Gastrocnemius medialis (tissue), 4 donors: ENCODE measurements at regions of chr16 and their contacts with region 1.

Region 1: DNA sequence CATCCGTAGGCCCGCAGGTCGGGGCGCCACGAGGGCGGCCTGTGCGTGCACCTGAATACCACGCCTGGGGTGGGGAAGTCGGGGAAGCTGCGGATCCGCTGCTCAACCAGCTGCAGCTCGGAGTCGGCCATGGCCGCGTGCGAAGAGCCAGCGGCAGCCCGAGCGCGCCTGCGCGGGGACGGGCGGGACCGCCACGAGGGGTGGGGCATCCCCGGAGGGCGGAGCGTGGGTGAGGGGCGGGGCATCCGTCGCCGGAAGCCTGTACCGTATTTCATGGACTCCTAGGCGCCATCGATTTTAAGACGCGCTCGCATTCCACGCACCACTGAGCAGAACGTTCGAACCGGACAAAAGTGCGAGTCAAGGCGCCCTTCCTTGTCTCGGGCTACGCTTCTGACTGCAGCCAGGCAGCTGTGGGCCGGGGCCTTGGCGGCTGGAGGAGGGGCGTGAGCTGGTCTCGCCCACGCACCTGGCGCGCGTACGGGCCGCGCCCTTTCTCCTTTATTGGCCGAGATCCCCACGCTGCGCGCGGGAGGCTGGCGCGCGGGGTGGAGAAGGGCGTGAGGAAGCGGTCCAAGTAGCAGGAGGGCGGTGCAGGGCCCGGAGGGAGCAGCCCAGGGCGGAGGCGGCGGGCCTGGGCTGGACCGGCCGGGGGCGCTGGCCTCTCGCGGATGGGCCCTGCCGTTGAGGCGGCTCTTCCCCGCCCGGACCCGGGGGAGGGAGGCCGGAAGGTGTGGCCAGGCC is at the start of gene APRT:
- DNase-seq: peak; percentile 89
- ATAC-seq: peak; percentile 90 to 92
- H3K4me3 ChIP-seq: peak within 1 kb of the TSS; percentile 70 to 81 (median 74)
- H3K27ac ChIP-seq: peak within 1 kb of the TSS; percentile 81 to 91 (median 90)
- H3K4me1 ChIP-seq: peaks cover 14 to 21% of the 10 kb centered on the region in 2 donors
- H3K27me3 ChIP-seq: no peaks in the 10 kb centered on the region
- CTCF ChIP-seq: peak in 3 of 5 experiments; percentile 16 to 45 (median 25)
- POLR2A ChIP-seq: peak; percentile 83 to 85
- total RNA-seq, gene APRT: 56.2 to 78.7 (median 62.4) TPM

Region 2: GRCh38 chr16:87860553-87861299 is 951.2 kb before region 1 on chr16:
- in situ Hi-C with region 1: no loop called
- intact Hi-C with region 1: loop called (anchors 10 kb)
- DNase-seq: peak; percentile 69 to 88
- ATAC-seq: peak; percentile 44 to 57
- H3K4me3 ChIP-seq: peak overlapping the region; percentile 56 to 68 (median 64)
- H3K27ac ChIP-seq: peak overlapping the region; percentile 85 to 100 (median 97)
- H3K4me1 ChIP-seq: peaks cover 27 to 47% of the 10 kb centered on the region in 2 donors
- H3K27me3 ChIP-seq: no peaks in the 10 kb centered on the region
- CTCF ChIP-seq: no peak
- POLR2A ChIP-seq: peak; percentile 83 to 85

Region 3: GRCh38 chr16:88856828-88857733 is 45.1 kb after region 1 on chr16 and contains the starts of genes GALNS and TRAPPC2L:
- in situ Hi-C with region 1: no loop called
- intact Hi-C with region 1: loop called (anchors 1 kb)
- DNase-seq: peak; percentile 97
- ATAC-seq: peak; percentile 92 to 95
- H3K4me3 ChIP-seq: peak within 1 kb of the TSS; percentile 91 to 99 (median 94)
- H3K27ac ChIP-seq: peak within 1 kb of the TSS; percentile 89 to 92 (median 90)
- H3K4me1 ChIP-seq: peaks cover 16 to 17% of the 10 kb centered on the region in 2 donors
- H3K27me3 ChIP-seq: no peaks in the 10 kb centered on the region
- CTCF ChIP-seq: peak in 2 of 5 experiments; percentile 44 to 54
- POLR2A ChIP-seq: peak; percentile 79 to 81
- total RNA-seq, gene GALNS: 8.8 to 14.7 (median 10.0) TPM
- total RNA-seq, gene TRAPPC2L: 17.8 to 27.9 (median 20.5) TPM

Region 4: DNA sequence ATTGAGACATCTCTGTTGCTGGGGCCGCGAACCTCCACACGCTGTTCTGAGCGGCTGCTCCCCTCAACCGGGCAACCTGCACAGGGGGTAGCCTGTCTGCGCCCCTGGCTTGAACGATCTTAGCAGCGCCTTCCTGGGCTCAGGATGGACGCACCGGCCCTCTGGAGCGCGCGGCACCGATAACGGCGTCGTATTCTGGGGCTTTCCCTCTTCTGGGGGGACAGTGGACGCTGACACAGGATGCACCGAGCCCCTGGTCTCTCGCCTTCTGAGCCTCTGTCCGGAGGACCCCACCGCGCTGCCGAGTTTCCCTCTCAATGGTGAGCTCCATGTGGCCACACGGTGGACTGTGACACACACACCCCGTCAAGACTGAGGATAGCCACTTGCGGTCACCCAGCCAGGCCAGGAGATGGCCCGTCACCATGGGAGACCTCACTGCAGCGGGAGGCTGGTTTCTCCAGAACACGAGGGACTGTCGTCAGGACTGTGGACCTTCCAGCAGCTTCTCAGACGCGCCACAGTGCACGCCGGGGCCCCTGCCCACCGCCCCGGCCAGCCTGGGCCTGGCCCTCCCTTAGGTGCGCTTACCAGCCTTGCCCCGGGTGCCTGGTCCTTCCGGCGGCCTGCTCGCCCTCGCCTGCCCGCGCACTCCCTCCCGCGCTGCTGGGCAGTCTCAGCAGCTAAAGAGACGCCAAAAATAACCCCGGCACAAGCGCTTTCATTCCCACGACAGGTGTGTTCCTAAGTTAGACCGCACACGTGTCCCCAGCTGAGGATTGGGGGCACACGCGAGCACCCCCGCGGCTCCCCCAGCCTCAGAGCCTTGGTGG is 84.5 kb after region 1 on chr16:
- in situ Hi-C with region 1: no loop called
- intact Hi-C with region 1: loop called (anchors 5 kb)
- DNase-seq: peak; percentile 50 to 68
- ATAC-seq: peak; percentile 78 to 88
- H3K4me3 ChIP-seq: peak overlapping the region; percentile 1 to 32 (median 18)
- H3K27ac ChIP-seq: peak overlapping the region; percentile 80 to 94 (median 87)
- H3K4me1 ChIP-seq: peaks cover 45 to 57% of the 10 kb centered on the region in 2 donors
- H3K27me3 ChIP-seq: no peaks in the 10 kb centered on the region
- CTCF ChIP-seq: peak in 1 of 5 experiments; percentile 12
- POLR2A ChIP-seq: peak; percentile 61 to 82

Region 5: DNA sequence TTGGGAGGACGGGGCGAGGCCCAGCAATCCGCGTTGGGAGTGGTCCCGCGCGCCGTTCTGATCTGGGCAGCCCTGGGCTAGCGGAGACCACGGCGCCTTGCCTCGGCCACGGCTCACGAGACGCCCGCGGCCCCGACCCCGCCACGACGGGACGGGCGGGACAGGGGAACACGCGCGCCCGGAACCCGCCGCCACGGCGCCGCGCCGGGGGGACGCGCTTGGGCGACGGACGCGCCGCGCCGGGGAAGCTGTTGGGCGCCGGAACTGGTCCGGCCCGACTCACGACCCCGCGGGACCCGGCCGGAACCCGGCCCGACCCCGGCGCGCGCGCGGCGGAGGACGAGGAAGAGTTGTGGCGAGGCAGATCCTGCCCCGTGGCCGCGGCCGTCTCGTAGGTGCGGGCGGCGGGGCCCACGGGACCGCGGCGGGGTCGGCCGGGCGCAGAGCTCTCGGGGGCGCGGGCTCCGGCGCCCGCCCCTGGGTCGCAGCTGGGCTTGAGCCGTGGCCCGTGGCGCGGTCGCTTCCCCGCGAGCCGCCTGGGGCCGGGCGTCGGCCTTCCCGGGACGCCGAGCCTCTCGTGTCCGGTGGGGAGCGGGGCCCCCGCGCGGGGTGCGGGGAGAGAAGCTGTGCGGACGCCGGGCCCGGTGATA is 281.8 kb after region 1 on chr16 and contains the start of gene ACSF3:
- in situ Hi-C with region 1: no loop called
- intact Hi-C with region 1: loop called (anchors 10 kb)
- DNase-seq: peak; percentile 25 to 55
- ATAC-seq: peak; percentile 89
- H3K4me3 ChIP-seq: peak within 1 kb of the TSS; percentile 71 to 94 (median 84)
- H3K27ac ChIP-seq: peak within 1 kb of the TSS; percentile 58 to 75 (median 64)
- H3K4me1 ChIP-seq: peaks cover 11 to 21% of the 10 kb centered on the region in 2 donors
- H3K27me3 ChIP-seq: peaks cover 8 to 12% (median 9%) of the 10 kb centered on the region in 3 donors
- CTCF ChIP-seq: peak in 1 of 5 experiments; percentile 27
- POLR2A ChIP-seq: peak; percentile 11 to 46
- total RNA-seq, gene ACSF3: 17.8 to 20.7 (median 19.4) TPM

Region 6: GRCh38 chr16:89217388-89218191 is 405.6 kb after region 1 on chr16 and contains the start of gene ZNF778:
- in situ Hi-C with region 1: no loop called
- intact Hi-C with region 1: loop called (anchors 5 kb)
- DNase-seq: peak; percentile 73 to 79
- ATAC-seq: peak; percentile 82 to 87
- H3K4me3 ChIP-seq: peak within 1 kb of the TSS; percentile 84 to 98 (median 92)
- H3K27ac ChIP-seq: peak within 1 kb of the TSS; percentile 95 to 100 (median 98)
- H3K4me1 ChIP-seq: peaks cover 25% of the 10 kb centered on the region in 2 donors
- H3K27me3 ChIP-seq: no peaks in the 10 kb centered on the region
- CTCF ChIP-seq: peak in 1 of 5 experiments; percentile 24
- POLR2A ChIP-seq: peak; percentile 94 to 97
- total RNA-seq, gene ZNF778: 10.7 to 21.3 (median 17.9) TPM